Activated CD8-positive, alpha-beta memory T cell treated with anti-CD3 and anti-CD28 coated beads, Interleukin-2, amount 10 ng/mL, durations not matched to agents 7 days and 5 days (primary cell): ENCODE measurements at regions of chr9 and their contacts with region 1.

Region 1: GRCh38 chr9:105881654-105882349 is 187.5 kb downstream of the TMEM38B start:
- DNase-seq: peak; percentile 82
- ATAC-seq: peak; percentile 32
- H3K4me3 Mint-ChIP-seq: no peak overlapping the region
- H3K27ac Mint-ChIP-seq: no peak overlapping the region
- H3K4me1 Mint-ChIP-seq: peaks cover 44% of the 10 kb centered on the region
- H3K27me3 Mint-ChIP-seq: peaks cover 35% of the 10 kb centered on the region

Region 2: GRCh38 chr9:105842023-105842644 is 39.7 kb before region 1 on chr9:
- CTCF ChIA-PET with region 1: interaction called, 103 read pairs
- DNase-seq: no peak
- ATAC-seq: no peak
- H3K4me3 Mint-ChIP-seq: no peak overlapping the region
- H3K27ac Mint-ChIP-seq: no peak overlapping the region
- H3K4me1 Mint-ChIP-seq: no peaks in the 10 kb centered on the region
- H3K27me3 Mint-ChIP-seq: no peaks in the 10 kb centered on the region

Region 3: GRCh38 chr9:105858006-105858690 is 23.7 kb before region 1 on chr9:
- CTCF ChIA-PET with region 1: interaction called, 11 read pairs
- DNase-seq: peak; percentile 64
- ATAC-seq: peak; percentile 68
- H3K4me3 Mint-ChIP-seq: no peak overlapping the region
- H3K27ac Mint-ChIP-seq: peak overlapping the region; percentile 82
- H3K4me1 Mint-ChIP-seq: peaks cover 25% of the 10 kb centered on the region
- H3K27me3 Mint-ChIP-seq: peaks cover 24% of the 10 kb centered on the region

Region 4: DNA sequence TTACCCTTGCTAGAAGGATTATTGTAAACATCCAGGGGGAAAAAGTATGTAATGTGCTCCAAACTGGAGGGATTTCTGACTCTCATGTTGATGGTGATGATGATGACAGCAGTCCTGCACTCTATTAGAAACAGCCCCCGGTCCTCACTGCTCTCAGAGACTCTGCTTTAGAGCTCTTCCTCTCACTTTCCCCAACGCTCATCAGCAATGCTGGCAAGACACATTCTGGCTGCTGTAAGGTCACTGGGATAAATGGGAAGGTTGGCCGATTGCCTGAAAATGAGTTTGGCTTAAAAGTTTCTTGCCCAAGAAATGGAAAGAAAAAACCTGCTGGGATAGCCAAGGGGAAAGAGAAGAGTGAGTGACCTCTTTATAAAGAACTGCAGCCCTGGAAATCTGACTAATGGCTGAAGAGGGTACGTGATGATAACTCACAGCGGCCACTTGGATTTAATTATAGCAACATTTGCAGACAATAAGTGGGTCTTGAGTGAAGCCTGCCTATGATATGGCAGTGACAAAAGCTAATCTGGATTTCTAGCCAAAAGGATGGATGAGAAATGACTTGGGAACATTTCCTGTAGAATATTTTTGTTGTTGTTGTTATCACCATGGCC is 48.3 kb after region 1 on chr9:
- CTCF ChIA-PET with region 1: no interaction called
- DNase-seq: no peak
- ATAC-seq: no peak
- H3K4me3 Mint-ChIP-seq: no peak overlapping the region
- H3K27ac Mint-ChIP-seq: no peak overlapping the region
- H3K4me1 Mint-ChIP-seq: no peaks in the 10 kb centered on the region
- H3K27me3 Mint-ChIP-seq: no peaks in the 10 kb centered on the region

Region 5: DNA sequence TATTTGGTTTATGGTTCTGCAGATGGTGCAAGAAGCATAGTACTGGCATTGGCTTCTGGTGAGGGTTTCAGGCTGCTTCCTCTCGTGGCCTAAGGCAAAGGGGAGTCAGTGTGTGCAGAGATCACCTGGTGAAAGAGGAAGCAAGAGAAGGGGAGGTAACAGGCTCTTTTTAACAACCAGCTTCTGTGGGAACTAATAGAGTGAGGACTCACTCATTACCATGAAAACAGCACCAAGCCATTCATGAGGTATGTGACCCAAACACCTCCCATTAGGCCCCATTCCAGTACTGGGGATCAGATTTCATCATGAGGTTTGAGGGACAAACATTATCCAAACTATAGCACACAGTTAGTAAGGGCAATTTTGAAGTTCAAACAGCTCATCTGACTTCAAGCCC is 76.0 kb after region 1 on chr9:
- CTCF ChIA-PET with region 1: no interaction called
- DNase-seq: no peak
- ATAC-seq: no peak
- H3K4me3 Mint-ChIP-seq: no peak overlapping the region
- H3K27ac Mint-ChIP-seq: no peak overlapping the region
- H3K4me1 Mint-ChIP-seq: no peaks in the 10 kb centered on the region
- H3K27me3 Mint-ChIP-seq: no peaks in the 10 kb centered on the region